GM12878 (cell line): ENCODE measurements at regions of chr7 and their contacts with region 1.

Region 1: DNA sequence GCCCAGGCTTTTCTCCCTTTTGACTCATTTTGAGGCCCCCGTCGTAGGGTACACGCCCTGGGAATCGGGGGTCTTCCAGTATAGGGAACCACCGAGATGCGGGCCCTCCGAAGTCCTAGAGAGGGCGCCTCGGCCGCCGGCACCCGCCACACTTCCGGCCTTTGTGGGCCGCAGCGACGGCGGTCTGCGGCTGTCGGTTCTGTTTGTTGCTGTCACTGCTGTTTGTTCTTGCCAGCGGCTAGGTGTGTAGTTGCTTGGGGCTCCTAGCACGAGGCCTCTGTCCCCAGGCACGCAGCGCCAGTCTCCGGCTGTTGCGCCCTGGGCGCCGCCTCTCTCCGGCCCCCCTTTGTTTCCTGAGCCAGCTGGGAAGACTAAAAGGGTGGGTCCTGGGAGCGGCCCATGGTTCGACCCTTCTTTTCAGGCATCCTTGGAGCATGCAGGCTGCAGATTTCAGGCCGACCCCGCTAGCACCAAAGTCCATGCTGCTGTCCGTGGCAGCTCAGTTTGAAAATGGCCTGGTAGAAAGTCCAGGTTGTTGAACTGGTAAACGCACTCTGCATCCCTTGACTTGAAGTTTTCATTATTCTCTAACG is 17.8 kb upstream of the ZKSCAN1 start:
- DNase-seq: no peak
- ATAC-seq: peak; percentile 91
- H3K4me3 ChIP-seq: peak overlapping the region; percentile 51; the same call in 1 of the 2 replicates
- H3K27ac ChIP-seq: no peak overlapping the region
- H3K4me1 ChIP-seq: peaks cover 12% of the 10 kb centered on the region; the same call in 1 of the 2 replicates
- H3K27me3 ChIP-seq: no peaks in the 10 kb centered on the region; a peak in 1 of 4 replicates
- CTCF ChIP-seq: peak; percentile 14 to 24 (median 15); a peak in 2 of 6 replicates
- EP300 ChIP-seq: no peak
- POLR2A ChIP-seq: peak; percentile 85
- RAD21 ChIP-seq: no peak

Region 2: GRCh38 chr7:100015232-100016209 is 17.9 kb after region 1 on chr7 and contains the start of gene ZKSCAN1:
- CTCF ChIA-PET with region 1: interaction called, 13 read pairs
- POLR2A ChIA-PET with region 1: interaction called, 3 read pairs
- RAD21 ChIA-PET with region 1: interaction called, 7 read pairs
- SMC1A ChIA-PET with region 1: interaction called, 15 read pairs
- in situ Hi-C with region 1: no loop called
- intact Hi-C with region 1: no loop called
- DNase-seq: peak; percentile 56
- ATAC-seq: peak; percentile 98
- H3K4me3 ChIP-seq: peak within 1 kb of the TSS; percentile 92
- H3K27ac ChIP-seq: peak within 1 kb of the TSS; percentile 90
- H3K4me1 ChIP-seq: peaks cover 4% of the 10 kb centered on the region; the same call in 1 of the 2 replicates
- H3K27me3 ChIP-seq: no peaks in the 10 kb centered on the region
- CTCF ChIP-seq: no peak
- EP300 ChIP-seq: no peak
- POLR2A ChIP-seq: peak; percentile 98
- RAD21 ChIP-seq: no peak
- polyA plus RNA-seq, gene ZKSCAN1: 3.2 to 4.6 TPM

Region 3: GRCh38 chr7:100049441-100050311 is 52.0 kb after region 1 on chr7 and contains the start of gene ZSCAN21:
- CTCF ChIA-PET with region 1: interaction called, 39 read pairs
- POLR2A ChIA-PET with region 1: no interaction called
- RAD21 ChIA-PET with region 1: interaction called, 3 read pairs
- SMC1A ChIA-PET with region 1: interaction called, 8 read pairs
- in situ Hi-C with region 1: no loop called
- intact Hi-C with region 1: loop called (anchors 2 kb)
- DNase-seq: peak; percentile 25
- ATAC-seq: peak; percentile 95
- H3K4me3 ChIP-seq: peak within 1 kb of the TSS; percentile 83
- H3K27ac ChIP-seq: peak within 1 kb of the TSS; percentile 82
- H3K4me1 ChIP-seq: peaks cover 7% of the 10 kb centered on the region
- H3K27me3 ChIP-seq: no peaks in the 10 kb centered on the region
- CTCF ChIP-seq: peak in 2 of 3 experiments; percentile 15; a peak in 2 of 6 replicates
- EP300 ChIP-seq: no peak
- POLR2A ChIP-seq: peak; percentile 95
- RAD21 ChIP-seq: no peak
- polyA plus RNA-seq, gene ZSCAN21: 1.9 to 3.1 TPM

Region 4: DNA sequence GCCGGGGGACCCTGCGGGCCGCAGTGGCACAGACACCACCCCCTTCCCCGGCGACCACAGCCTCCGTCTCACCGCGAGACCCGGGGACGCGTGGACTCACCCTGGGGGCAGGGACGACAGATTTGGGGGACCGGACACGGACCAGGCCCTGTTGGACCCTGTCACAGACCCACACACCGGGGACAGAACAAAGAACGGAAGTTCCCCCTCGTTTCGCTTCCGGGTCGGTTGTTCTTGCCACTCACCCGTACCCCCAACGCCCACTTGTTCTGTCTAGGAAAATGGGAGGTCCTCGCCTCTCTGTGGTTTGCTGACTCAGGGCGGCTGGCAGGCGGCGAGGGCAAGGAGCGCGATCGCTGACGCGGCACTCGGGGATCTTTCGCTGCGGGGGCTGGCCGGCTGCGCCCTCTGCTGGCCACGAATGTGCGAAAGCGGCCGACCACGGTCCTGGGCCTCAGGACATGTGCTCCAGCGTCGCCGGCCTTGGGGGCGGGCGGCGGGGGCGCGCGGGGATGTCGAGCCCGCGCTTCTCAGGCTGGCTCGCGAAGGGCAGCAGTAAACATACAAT is 84.0 kb after region 1 on chr7 and contains the start of gene ZNF3:
- CTCF ChIA-PET with region 1: interaction called, 12 read pairs
- POLR2A ChIA-PET with region 1: interaction called, 7 read pairs
- RAD21 ChIA-PET with region 1: interaction called, 5 read pairs
- SMC1A ChIA-PET with region 1: interaction called, 7 read pairs
- in situ Hi-C with region 1: no loop called
- intact Hi-C with region 1: loop called (anchors 1 kb)
- DNase-seq: peak; percentile 97
- ATAC-seq: peak; percentile 90
- H3K4me3 ChIP-seq: peak within 1 kb of the TSS; percentile 88
- H3K27ac ChIP-seq: peak within 1 kb of the TSS; percentile 89
- H3K4me1 ChIP-seq: peaks cover 4% of the 10 kb centered on the region
- H3K27me3 ChIP-seq: no peaks in the 10 kb centered on the region
- CTCF ChIP-seq: peak; percentile 84 to 97 (median 89); a peak in 5 of 6 replicates
- EP300 ChIP-seq: peak in 1 of 2 experiments; percentile 60; a peak in 1 of 4 replicates
- POLR2A ChIP-seq: peak; percentile 96
- RAD21 ChIP-seq: peak; percentile 66
- polyA plus RNA-seq, gene ZNF3: 17.2 to 19.0 TPM